PC-3 (cell line): ENCODE measurements at regions of chr4 and their contacts with region 1.

Region 1: DNA sequence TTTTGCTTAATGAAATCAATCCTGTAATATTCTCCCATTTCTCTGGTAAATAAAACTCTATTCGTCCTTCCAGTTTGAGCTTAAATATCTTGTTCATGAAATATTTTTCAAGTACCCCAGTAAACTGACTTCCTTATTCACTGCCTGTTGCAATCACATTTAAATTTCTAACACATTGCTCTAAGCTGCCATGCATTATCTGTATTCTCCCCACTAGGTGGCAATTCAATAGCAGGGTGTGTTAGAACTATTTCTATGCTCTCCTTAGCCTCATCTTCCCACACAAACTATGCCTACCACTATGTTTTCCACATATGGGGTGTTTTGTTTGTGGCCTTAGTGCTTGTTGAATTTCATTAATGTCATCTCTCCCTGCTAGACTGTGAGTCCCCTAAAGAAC is 377.1 kb upstream of the HS3ST1 start:
- DNase-seq: peak; percentile 37
- ATAC-seq: peak; percentile 76
- H3K4me3 ChIP-seq: no peak overlapping the region
- H3K27ac ChIP-seq: no peak overlapping the region
- H3K4me1 ChIP-seq: no peaks in the 10 kb centered on the region
- H3K27me3 ChIP-seq: no peaks in the 10 kb centered on the region
- CTCF ChIP-seq: peak; percentile 61

Region 2: GRCh38 chr4:12633053-12633651 is 827.3 kb after region 1 on chr4:
- CTCF ChIA-PET with region 1: no interaction called
- POLR2A ChIA-PET with region 1: no interaction called
- intact Hi-C with region 1: loop called (anchors 5 kb)
- DNase-seq: peak; percentile 85
- ATAC-seq: peak; percentile 83
- H3K4me3 ChIP-seq: no peak overlapping the region
- H3K27ac ChIP-seq: no peak overlapping the region
- H3K4me1 ChIP-seq: no peaks in the 10 kb centered on the region
- H3K27me3 ChIP-seq: no peaks in the 10 kb centered on the region
- CTCF ChIP-seq: peak; percentile 79